HCT116 (cell line): ENCODE measurements at regions of chr5 and their contacts with region 1.

Region 1: GRCh38 chr5:76771705-76772405 is 47.0 kb upstream of the F2RL1 start:
- DNase-seq: no peak
- ATAC-seq: no peak
- H3K4me3 ChIP-seq: no peak overlapping the region
- H3K27ac ChIP-seq: no peak overlapping the region
- H3K4me1 ChIP-seq: peaks cover 5 to 21% of the 10 kb centered on the region in 2 experiments; a peak in 2 of 4 replicates
- H3K27me3 ChIP-seq: no peaks in the 10 kb centered on the region
- CTCF ChIP-seq: no peak
- POLR2A ChIP-seq: no peak
- RAD21 ChIP-seq: no peak

Region 2: DNA sequence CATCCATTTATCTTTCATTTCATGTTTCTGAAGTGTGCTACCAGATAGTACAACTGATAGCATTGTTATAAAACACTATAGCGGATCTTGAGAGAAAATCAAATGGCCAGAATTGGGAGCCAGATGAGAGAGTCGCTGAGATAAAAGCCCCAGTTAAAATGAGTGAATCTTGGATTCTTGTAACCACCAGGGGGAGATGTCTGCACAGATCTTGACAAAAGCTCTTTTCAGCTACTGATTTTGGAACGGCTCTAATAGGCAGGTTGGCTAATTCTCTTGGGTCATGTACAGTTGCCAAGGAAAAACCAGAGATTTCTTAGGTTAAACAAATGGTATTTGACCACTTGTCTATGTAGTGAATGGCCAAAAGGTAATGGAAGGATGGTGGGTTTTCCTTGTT is 170.4 kb before region 1 on chr5:
- CTCF ChIA-PET with region 1: interaction called, 111 read pairs
- POLR2A ChIA-PET with region 1: no interaction called
- RAD21 ChIA-PET with region 1: interaction called, 6 to 13 read pairs
- intact Hi-C with region 1: loop called (anchors 1 kb)
- DNase-seq: peak; percentile 48
- ATAC-seq: peak; percentile 84
- H3K4me3 ChIP-seq: no peak overlapping the region
- H3K27ac ChIP-seq: no peak overlapping the region
- H3K4me1 ChIP-seq: peaks cover 4% of the 10 kb centered on the region in 2 experiments; a peak in 3 of 4 replicates
- H3K27me3 ChIP-seq: no peaks in the 10 kb centered on the region
- CTCF ChIP-seq: peak; percentile 64 to 84 (median 82)
- POLR2A ChIP-seq: no peak
- RAD21 ChIP-seq: peak; percentile 91

Region 3: DNA sequence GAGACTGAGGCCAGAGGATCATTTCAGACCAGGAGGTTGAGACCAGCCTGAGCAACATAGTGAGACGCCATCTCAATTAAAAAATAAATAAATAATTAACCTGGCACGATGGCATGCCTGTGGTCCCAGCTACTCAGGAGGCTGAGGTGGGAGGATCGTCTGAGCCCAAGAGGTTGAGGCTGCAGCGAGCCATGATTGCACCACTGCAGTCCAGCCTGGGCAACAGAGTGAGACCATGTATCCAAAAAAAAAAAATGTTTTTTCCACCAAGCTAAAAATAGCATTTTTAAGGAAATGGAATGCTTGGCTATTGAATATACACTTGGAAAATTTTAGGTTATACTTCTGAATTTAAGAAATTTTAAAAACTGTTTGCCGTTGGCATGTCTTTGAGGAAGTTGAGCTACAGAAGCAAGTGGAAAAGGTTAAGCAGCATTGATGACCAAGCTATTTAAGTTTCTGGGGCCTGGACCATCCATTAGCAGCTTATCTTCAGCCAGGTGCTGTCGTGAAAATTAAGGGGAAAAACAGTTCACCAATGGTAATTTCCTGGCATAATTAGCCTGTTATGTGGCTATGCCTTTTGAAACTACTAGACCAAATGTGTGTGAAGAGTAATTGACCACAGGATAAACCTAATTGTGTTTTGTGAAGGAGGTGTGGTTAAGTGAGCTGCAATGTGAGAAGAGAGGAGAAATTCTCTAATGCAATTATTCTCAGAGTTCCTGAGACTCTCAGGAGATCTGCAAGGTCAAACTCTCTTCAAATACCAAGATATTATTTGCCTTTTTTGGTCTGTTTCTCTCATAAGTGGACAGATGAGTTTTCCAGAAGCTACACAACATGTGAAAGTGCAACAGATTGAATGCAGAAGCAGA is 34.9 kb before region 1 on chr5:
- CTCF ChIA-PET with region 1: interaction called, 11 read pairs
- POLR2A ChIA-PET with region 1: interaction called, 4 read pairs
- RAD21 ChIA-PET with region 1: no interaction called
- intact Hi-C with region 1: no loop called
- DNase-seq: no peak
- ATAC-seq: no peak
- H3K4me3 ChIP-seq: no peak overlapping the region
- H3K27ac ChIP-seq: no peak overlapping the region
- H3K4me1 ChIP-seq: peaks cover 18 to 51% of the 10 kb centered on the region in 2 experiments
- H3K27me3 ChIP-seq: no peaks in the 10 kb centered on the region
- CTCF ChIP-seq: no peak
- POLR2A ChIP-seq: no peak
- RAD21 ChIP-seq: no peak

Region 4: GRCh38 chr5:76790632-76791290 is 18.9 kb after region 1 on chr5:
- CTCF ChIA-PET with region 1: interaction called, 15 read pairs
- POLR2A ChIA-PET with region 1: interaction called, 6 read pairs
- RAD21 ChIA-PET with region 1: interaction called in 1 of 2 experiments, 3 read pairs
- intact Hi-C with region 1: no loop called
- DNase-seq: peak; percentile 95
- ATAC-seq: peak; percentile 76
- H3K4me3 ChIP-seq: peak overlapping the region in 1 of 2 experiments; percentile 12; a peak in 1 of 4 replicates
- H3K27ac ChIP-seq: peak overlapping the region; percentile 79
- H3K4me1 ChIP-seq: peaks cover 46 to 75% of the 10 kb centered on the region in 2 experiments
- H3K27me3 ChIP-seq: no peaks in the 10 kb centered on the region
- CTCF ChIP-seq: no peak
- POLR2A ChIP-seq: no peak
- RAD21 ChIP-seq: peak; percentile 32; the same call in 1 of the 2 replicates

Region 5: DNA sequence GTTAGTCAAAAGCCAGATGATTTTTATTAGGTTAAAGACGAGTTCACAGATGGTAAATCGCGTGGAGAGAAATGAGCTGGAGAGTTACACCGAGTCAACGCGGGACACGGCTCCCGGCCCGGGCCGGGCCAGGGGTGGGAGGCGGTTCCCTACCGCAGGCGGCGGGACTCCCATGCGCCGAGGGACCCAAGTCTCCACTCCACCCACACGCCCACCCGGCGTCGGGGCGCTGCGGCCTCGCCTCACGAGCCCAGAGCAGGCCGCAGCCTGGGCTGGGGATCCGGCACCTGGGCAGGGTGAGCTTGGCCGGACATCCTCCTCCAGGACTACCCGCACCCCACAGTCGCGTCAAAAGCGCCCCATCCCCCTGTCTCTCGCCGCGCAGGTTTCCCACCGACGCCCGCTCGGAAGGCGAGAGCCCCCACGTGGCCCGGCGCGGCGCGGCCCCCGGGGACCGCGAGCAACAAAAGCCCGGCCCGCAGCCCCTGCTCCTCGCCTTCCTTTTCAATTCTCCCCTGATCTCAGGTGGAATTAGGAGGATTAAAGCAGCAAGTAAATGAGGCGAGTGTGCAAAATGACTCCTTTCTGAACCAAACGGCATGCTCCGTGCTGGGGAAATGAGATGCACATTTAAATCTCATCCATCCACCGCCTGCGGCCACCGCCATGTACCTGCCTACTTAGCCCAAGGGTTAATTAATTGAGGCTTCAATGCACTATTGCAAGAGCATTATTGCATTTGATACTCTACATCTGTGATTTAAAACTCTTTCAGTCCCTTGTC is 1200.8 kb after region 1 on chr5:
- CTCF ChIA-PET with region 1: no interaction called
- POLR2A ChIA-PET with region 1: no interaction called
- RAD21 ChIA-PET with region 1: no interaction called
- intact Hi-C with region 1: no loop called
- DNase-seq: no peak
- ATAC-seq: no peak
- H3K4me3 ChIP-seq: no peak overlapping the region
- H3K27ac ChIP-seq: no peak overlapping the region
- H3K4me1 ChIP-seq: no peaks in the 10 kb centered on the region
- H3K27me3 ChIP-seq: 0 out of 2 replicates have a peak, but pooled peaks cover 4% of the 10 kb centered on the region
- CTCF ChIP-seq: no peak
- POLR2A ChIP-seq: no peak
- RAD21 ChIP-seq: no peak